ENCODE measurements at regions of chr2 and their contacts with region 1.

Region 1: GRCh38 chr2:200747668-200748618 is 63.8 kb upstream of the BZW1 start:
- DNase-seq: peak; percentile 99
- ATAC-seq: peak; percentile 94
- H3K4me3 ChIP-seq: peak overlapping the region; percentile 30 to 51 (median 46)
- H3K27ac ChIP-seq: peak overlapping the region; percentile 68
- H3K4me1 ChIP-seq: peaks cover 57% of the 10 kb centered on the region
- H3K27me3 ChIP-seq: peaks cover 0 to 7% of the 10 kb centered on the region in 2 experiments; a peak in 2 of 5 replicates
- CTCF ChIP-seq: no peak
- EP300 ChIP-seq: peak; percentile 73 to 91; a peak in 3 of 4 replicates
- POLR2A ChIP-seq: peak in 1 of 2 experiments; percentile 69; a peak in 2 of 4 replicates
- RAD21 ChIP-seq: no peak

Region 2: GRCh38 chr2:200454927-200455801 is 292.8 kb before region 1 on chr2:
- CTCF ChIA-PET with region 1: no interaction called
- POLR2A ChIA-PET with region 1: no interaction called
- in situ Hi-C with region 1: no loop called
- intact Hi-C with region 1: no loop called
- DNase-seq: peak; percentile 15
- ATAC-seq: peak; percentile 29
- H3K4me3 ChIP-seq: no peak overlapping the region
- H3K27ac ChIP-seq: no peak overlapping the region
- H3K4me1 ChIP-seq: no peaks in the 10 kb centered on the region
- H3K27me3 ChIP-seq: no peaks in the 10 kb centered on the region
- CTCF ChIP-seq: no peak
- EP300 ChIP-seq: no peak
- POLR2A ChIP-seq: peak in 1 of 2 experiments; percentile 34; a peak in 1 of 4 replicates
- RAD21 ChIP-seq: no peak

Region 3: DNA sequence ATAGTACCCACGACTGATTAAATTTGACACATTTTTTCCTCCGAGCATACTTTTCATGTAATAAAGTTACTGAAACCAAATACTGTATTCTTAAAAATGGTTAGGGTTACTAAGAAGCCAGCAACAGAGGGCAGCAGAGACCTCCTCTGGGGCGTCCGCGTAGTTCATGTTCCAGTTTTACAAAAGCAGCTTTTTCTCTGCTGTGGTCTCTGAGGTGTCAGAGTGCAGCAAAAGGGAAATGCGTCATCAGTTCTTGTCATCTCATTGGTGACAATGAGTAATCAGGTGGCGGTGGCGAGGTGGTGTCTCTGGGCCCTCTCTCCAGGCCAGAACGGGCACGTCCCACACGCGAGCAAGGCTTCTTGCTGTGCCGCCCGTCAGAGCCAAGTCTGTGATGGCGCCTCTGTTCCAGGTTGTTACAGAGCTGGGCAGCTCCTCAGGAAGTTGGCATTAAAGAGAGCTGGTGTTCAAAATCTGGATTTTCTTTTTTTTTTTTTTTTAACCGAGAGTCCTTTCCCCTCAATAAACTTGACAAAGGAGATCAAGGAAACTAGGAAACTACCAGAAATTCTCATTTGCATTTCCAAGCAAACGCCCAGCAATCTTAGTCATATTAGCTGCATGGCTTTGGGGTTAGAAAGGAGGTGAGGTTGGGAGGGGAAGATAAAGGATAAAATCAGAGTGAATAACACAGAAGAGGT is 34.8 kb before region 1 on chr2:
- CTCF ChIA-PET with region 1: no interaction called
- POLR2A ChIA-PET with region 1: interaction called, 7 read pairs
- in situ Hi-C with region 1: loop called (anchors 5 kb)
- intact Hi-C with region 1: loop called (anchors 5 kb)
- DNase-seq: peak; percentile 96
- ATAC-seq: peak; percentile 94
- H3K4me3 ChIP-seq: peak overlapping the region; percentile 35 to 65 (median 50); a peak in 5 of 6 replicates
- H3K27ac ChIP-seq: peak overlapping the region; percentile 41
- H3K4me1 ChIP-seq: peaks cover 20% of the 10 kb centered on the region
- H3K27me3 ChIP-seq: no peaks in the 10 kb centered on the region; a peak in 1 of 5 replicates
- CTCF ChIP-seq: peak; percentile 94
- EP300 ChIP-seq: peak in 1 of 2 experiments; percentile 47; a peak in 1 of 4 replicates
- POLR2A ChIP-seq: peak; percentile 74 to 92
- RAD21 ChIP-seq: peak; percentile 93

Region 4: GRCh38 chr2:200725596-200725995 is 22.3 kb before region 1 on chr2:
- CTCF ChIA-PET with region 1: no interaction called
- POLR2A ChIA-PET with region 1: no interaction called
- in situ Hi-C with region 1: no loop called
- intact Hi-C with region 1: no loop called
- DNase-seq: no peak
- ATAC-seq: no peak
- H3K4me3 ChIP-seq: no peak overlapping the region
- H3K27ac ChIP-seq: no peak overlapping the region
- H3K4me1 ChIP-seq: peaks cover 5% of the 10 kb centered on the region; the same call in 1 of the 2 replicates
- H3K27me3 ChIP-seq: peaks cover 2 to 40% of the 10 kb centered on the region in 2 experiments; a peak in 3 of 5 replicates
- CTCF ChIP-seq: no peak
- EP300 ChIP-seq: no peak
- POLR2A ChIP-seq: no peak
- RAD21 ChIP-seq: no peak

Region 5: DNA sequence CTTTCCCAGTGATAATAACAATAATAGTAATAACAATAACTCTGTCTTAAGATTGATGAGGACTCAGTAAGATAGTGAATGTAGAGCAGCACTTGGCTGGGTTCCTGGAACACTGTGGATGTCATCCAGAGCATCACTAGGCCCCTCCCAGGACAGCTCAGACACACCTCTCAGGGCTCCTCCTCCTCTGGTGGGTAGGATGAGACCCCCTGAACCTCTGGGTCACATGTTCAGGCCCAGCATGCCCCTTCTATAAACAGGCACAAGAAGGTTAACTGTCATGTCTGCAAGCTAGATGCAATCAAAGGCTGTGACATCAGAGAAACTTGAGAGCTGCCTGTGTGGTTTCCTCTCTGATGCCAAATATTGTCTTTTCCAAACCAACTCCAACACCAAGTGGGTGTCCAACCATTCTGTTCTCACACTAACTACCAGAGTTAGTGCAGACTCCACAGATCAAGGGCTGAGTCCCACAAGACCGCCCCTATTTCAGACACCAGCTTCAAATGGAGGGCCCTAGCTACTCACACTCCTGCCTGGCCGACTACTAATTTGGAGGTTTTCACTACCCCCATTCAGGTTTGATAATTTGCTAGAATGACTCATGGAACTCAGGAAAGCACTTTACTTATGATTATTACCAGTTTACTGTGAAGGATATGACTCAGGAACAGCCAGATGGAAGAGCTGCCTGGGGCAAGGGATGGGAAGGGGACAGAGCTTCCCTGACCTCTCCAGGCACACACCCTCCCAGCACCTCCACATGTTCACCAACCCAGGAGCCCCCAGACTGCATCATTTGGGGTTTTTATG is 17.4 kb after region 1 on chr2:
- CTCF ChIA-PET with region 1: no interaction called
- POLR2A ChIA-PET with region 1: interaction called, 140 read pairs
- in situ Hi-C with region 1: no loop called
- intact Hi-C with region 1: no loop called
- DNase-seq: peak; percentile 34
- ATAC-seq: peak; percentile 42; the same call in 2 of the 3 replicates
- H3K4me3 ChIP-seq: no peak overlapping the region
- H3K27ac ChIP-seq: no peak overlapping the region
- H3K4me1 ChIP-seq: peaks cover 30% of the 10 kb centered on the region
- H3K27me3 ChIP-seq: peaks cover 3 to 17% of the 10 kb centered on the region in 2 experiments; a peak in 3 of 5 replicates
- CTCF ChIP-seq: no peak
- EP300 ChIP-seq: no peak
- POLR2A ChIP-seq: no peak
- RAD21 ChIP-seq: no peak

Region 6: DNA sequence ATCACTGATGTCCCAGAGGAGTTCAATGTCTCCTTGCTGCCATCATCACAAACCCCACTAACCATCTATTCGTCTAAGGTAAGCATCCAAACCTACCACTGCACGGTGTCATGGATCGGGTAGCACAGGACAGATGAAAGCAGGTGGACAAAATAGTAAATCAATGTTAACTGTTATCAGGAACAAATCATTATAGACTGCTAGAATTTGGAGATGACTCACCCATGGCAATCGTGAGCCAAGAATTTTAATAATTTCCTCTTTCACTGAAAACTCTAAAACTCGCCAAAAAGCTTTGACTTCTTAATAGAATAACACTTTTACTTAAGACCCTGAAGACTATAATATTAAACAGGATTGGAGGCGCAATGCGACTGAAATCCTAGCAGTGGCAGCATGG is 30.1 kb after region 1 on chr2:
- CTCF ChIA-PET with region 1: no interaction called
- POLR2A ChIA-PET with region 1: interaction called, 10 read pairs
- in situ Hi-C with region 1: no loop called
- intact Hi-C with region 1: no loop called
- DNase-seq: no peak
- ATAC-seq: no peak
- H3K4me3 ChIP-seq: no peak overlapping the region
- H3K27ac ChIP-seq: no peak overlapping the region
- H3K4me1 ChIP-seq: peaks cover 30% of the 10 kb centered on the region
- H3K27me3 ChIP-seq: no peaks in the 10 kb centered on the region; a peak in 2 of 5 replicates
- CTCF ChIP-seq: no peak
- EP300 ChIP-seq: no peak
- POLR2A ChIP-seq: no peak
- RAD21 ChIP-seq: no peak

Region 7: GRCh38 chr2:200795044-200795443 is 47.1 kb after region 1 on chr2:
- CTCF ChIA-PET with region 1: no interaction called
- POLR2A ChIA-PET with region 1: no interaction called
- in situ Hi-C with region 1: no loop called
- intact Hi-C with region 1: loop called (anchors 5 kb)
- DNase-seq: peak; percentile 25
- ATAC-seq: peak; percentile 71
- H3K4me3 ChIP-seq: no peak overlapping the region
- H3K27ac ChIP-seq: no peak overlapping the region
- H3K4me1 ChIP-seq: peaks cover 29% of the 10 kb centered on the region
- H3K27me3 ChIP-seq: no peaks in the 10 kb centered on the region
- CTCF ChIP-seq: peak; percentile 77
- EP300 ChIP-seq: no peak
- POLR2A ChIP-seq: no peak
- RAD21 ChIP-seq: peak; percentile 40; the same call in 1 of the 2 replicates

Region 8: GRCh38 chr2:200888704-200889625 is 141.0 kb after region 1 on chr2 and contains the starts of genes NIF3L1 and PPIL3:
- CTCF ChIA-PET with region 1: no interaction called
- POLR2A ChIA-PET with region 1: interaction called, 11 read pairs
- in situ Hi-C with region 1: no loop called
- intact Hi-C with region 1: loop called (anchors 10 kb)
- DNase-seq: peak; percentile 99
- ATAC-seq: peak; percentile 90
- H3K4me3 ChIP-seq: peak within 1 kb of the TSS; percentile 79 to 92 (median 90)
- H3K27ac ChIP-seq: peak within 1 kb of the TSS; percentile 97
- H3K4me1 ChIP-seq: peaks cover 34% of the 10 kb centered on the region
- H3K27me3 ChIP-seq: no peaks in the 10 kb centered on the region; a peak in 2 of 5 replicates
- CTCF ChIP-seq: no peak; the same call in none of the 2 replicates
- EP300 ChIP-seq: peak; percentile 30 to 68; a peak in 2 of 4 replicates
- POLR2A ChIP-seq: peak; percentile 69 to 95
- RAD21 ChIP-seq: 0 out of 2 replicates have a peak, but pooled peaks have one; percentile 17
- total RNA-seq, gene NIF3L1: 67.9 and 98.5 TPM in 2 replicates
- total RNA-seq, gene PPIL3: 98.7 and 126 TPM in 2 replicates